ENCODE measurements at regions of chr12 and their contacts with region 1.

Region 1: GRCh38 chr12:89051065-89051677 is 301.1 kb downstream of the DUSP6 start:
- DNase-seq: peak in 17 of 42 donors; percentile 8 to 61 (median 36)

Region 2: DNA sequence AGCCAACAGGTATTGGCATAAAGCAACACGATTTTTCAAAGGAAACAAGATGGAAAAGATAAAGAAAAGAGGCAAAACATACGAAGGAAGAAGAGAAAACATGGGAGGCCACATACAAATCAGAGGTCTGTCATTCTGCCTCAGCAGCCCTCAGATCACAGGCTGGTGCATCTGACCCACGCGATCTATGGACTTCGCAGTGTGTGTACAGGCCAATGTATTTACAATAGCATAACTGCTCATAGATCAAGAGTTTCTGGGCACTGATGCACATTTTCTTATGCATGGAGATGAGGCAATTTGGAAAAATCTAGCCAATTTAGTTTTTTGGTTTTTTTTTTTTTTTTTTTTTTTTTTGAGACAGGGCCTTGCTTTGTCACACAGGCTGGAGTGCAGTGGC is 55.8 kb after region 1 on chr12:
- intact Hi-C with region 1: no loop called
- DNase-seq: no peak

Region 3: DNA sequence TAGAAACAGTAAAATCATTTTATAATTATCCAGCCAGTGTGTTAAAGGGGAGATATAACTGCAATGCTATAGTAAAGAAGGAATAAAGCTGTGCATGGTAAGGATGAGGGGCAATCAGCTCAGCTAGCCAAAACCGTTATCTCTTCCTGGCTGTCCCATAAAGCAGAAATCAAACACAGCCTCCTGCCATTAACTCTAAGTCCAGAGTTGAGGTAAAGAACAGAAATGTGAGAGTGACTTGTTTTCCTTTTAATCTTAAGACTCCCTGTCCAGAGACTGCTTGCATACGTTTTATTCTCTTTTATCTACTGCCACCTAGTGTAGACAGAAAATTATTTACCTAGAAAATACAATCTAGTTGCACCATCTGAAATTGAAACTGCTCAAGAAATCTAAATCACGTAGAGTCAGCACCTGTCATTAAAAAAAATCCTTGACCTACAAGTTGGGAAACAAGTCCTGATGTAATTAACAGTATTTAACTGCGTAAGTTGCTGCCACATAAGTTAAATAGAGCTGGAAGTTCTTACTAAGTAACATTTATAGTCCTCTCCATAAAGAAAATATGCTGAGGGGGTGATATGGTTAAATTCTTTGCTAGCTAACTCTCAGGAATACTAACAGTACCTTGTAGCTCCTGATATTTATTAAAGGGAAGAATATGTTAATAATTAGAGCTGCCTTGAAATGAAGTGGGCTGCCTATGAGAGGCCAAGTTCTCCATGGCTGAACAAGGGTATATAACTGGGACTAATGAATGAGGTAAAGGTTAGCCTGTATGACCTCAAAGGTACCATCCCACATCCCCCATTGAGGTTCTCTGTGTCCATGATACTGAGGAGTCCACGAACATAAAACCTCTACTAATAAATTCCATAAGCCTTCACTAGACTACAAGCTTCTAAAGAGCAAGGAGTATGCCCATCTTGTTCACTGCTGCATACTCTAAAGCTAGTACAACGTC is 410.8 kb after region 1 on chr12:
- intact Hi-C with region 1: loop called (anchors 5 kb)
- DNase-seq: no peak

Measured in head of caudate nucleus (tissue), 42 donors.